H1 (cell line): ENCODE measurements at regions of chr16 and their contacts with region 1.

Region 1: DNA sequence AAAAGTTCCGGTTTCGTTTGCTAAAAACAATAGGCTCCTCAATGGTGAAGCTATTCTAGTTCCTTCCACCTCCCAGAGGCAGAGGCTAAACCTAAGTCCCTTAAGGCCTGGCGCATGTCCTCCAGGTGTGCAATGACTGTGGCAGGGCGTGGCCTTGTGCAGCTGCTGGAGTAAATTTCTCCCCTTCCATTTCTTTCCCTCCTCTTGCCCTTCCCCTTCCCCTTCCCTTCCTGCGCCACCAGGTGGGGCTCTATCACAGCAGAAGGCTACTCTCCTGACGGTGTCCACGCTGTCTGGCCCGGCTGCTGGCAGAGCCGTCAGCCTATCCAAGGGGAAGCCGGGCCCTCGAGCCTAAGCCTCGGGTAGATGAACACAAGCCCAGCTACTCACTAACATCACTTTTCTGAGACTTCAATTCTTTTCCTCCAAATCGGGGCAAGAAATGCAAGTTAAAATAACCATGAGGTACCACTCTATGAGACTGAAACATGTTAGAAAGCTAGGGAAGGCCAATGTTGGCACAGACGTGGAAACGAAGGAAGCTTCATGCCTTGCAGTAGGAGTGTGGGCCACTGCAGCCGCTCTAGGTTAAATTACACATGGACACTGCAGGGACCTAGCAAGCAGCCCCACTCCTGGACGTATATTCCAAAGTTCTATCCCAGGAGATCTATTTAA is 34.4 kb downstream of the C16orf78 start:
- DNase-seq: peak; percentile 73 to 91
- H3K4me3 ChIP-seq: no peak overlapping the region
- H3K27ac ChIP-seq: no peak overlapping the region
- H3K4me1 ChIP-seq: peaks cover 0 to 2% (median 0%) of the 10 kb centered on the region in 4 experiments; a peak in 1 of 7 replicates
- H3K27me3 ChIP-seq: no peaks in the 10 kb centered on the region; a peak in 1 of 7 replicates
- CTCF ChIP-seq: peak; percentile 86 to 94 (median 93)
- EP300 ChIP-seq: no peak
- POLR2A ChIP-seq: no peak
- RAD21 ChIP-seq: peak; percentile 100

Region 2: GRCh38 chr16:49382916-49383315 is 25.1 kb before region 1 on chr16:
- CTCF ChIA-PET with region 1: interaction called, 12 read pairs
- POLR2A ChIA-PET with region 1: no interaction called
- DNase-seq: peak in 1 of 2 experiments; percentile 70
- H3K4me3 ChIP-seq: no peak overlapping the region
- H3K27ac ChIP-seq: no peak overlapping the region
- H3K4me1 ChIP-seq: no peaks in the 10 kb centered on the region
- H3K27me3 ChIP-seq: no peaks in the 10 kb centered on the region
- CTCF ChIP-seq: peak; percentile 53 to 75 (median 58)
- EP300 ChIP-seq: no peak
- POLR2A ChIP-seq: no peak
- RAD21 ChIP-seq: peak; percentile 39 to 58

Region 3: DNA sequence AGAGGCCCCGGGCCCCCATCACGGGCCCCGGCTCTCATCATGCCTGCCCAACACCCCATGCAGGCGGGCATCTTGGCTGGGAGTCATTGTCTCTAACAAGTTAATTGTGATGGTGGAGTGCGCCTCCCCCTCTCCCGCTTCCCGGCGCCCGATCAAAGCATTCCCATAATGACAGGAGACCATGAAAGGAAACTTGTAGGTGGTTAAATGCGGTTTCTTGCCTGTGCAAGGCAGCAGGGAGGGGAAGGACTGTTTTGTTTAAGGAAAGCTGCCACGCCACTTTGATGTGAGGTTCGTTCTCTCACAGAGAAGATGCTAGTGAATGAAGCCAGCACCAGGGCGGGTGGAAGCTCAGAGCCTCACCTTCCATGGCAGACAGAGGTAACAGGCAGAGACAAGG is 11.0 kb after region 1 on chr16:
- CTCF ChIA-PET with region 1: interaction called, 16 read pairs
- POLR2A ChIA-PET with region 1: no interaction called
- DNase-seq: no peak
- H3K4me3 ChIP-seq: no peak overlapping the region
- H3K27ac ChIP-seq: no peak overlapping the region
- H3K4me1 ChIP-seq: no peaks in the 10 kb centered on the region
- H3K27me3 ChIP-seq: no peaks in the 10 kb centered on the region; a peak in 1 of 7 replicates
- CTCF ChIP-seq: no peak
- EP300 ChIP-seq: no peak
- POLR2A ChIP-seq: no peak
- RAD21 ChIP-seq: no peak

Region 4: DNA sequence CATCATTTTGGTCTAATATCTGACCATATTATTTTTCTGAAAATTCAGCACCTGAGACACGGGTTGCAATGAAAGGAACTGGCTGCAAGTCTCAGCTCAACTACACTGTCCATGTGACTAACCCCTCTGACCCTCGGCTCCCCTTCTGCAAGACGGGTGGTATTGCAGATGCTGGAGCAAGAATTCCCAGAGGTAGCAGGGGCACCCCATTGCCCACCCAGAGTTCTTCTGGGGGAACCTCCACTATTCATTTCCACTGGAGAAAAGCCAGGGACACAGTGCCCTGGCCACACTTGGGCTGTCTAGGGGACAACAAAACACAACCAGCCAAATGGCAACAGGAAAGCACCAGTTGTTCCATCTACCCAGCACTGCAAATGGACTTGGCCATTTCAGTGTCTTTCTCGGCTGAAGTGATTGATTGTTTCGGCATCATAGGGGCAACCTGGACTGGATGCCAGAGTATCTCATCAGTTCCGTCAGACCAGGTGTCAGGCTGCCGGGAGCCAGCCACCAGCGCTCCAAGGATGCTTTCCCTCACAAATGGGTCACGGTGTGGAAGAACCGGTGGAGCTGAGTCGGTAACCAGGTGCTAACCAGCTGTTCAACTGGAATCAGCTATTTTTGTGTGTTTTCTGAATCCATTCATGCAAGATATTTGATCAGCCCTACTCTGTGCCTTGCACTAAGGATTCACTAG is 23.7 kb after region 1 on chr16:
- CTCF ChIA-PET with region 1: interaction called, 33 read pairs
- POLR2A ChIA-PET with region 1: no interaction called
- DNase-seq: no peak
- H3K4me3 ChIP-seq: no peak overlapping the region
- H3K27ac ChIP-seq: no peak overlapping the region
- H3K4me1 ChIP-seq: no peaks in the 10 kb centered on the region
- H3K27me3 ChIP-seq: no peaks in the 10 kb centered on the region
- CTCF ChIP-seq: peak in 2 of 3 experiments; percentile 2 to 22; a peak in 2 of 4 replicates
- EP300 ChIP-seq: no peak
- POLR2A ChIP-seq: no peak
- RAD21 ChIP-seq: no peak

Region 5: GRCh38 chr16:49441366-49441780 is 33.4 kb after region 1 on chr16:
- CTCF ChIA-PET with region 1: interaction called, 33 read pairs
- POLR2A ChIA-PET with region 1: no interaction called
- DNase-seq: peak in 1 of 2 experiments; percentile 68
- H3K4me3 ChIP-seq: no peak overlapping the region
- H3K27ac ChIP-seq: no peak overlapping the region
- H3K4me1 ChIP-seq: peaks cover 8 to 23% (median 18%) of the 10 kb centered on the region in 4 experiments
- H3K27me3 ChIP-seq: no peaks in the 10 kb centered on the region; a peak in 1 of 7 replicates
- CTCF ChIP-seq: peak in 2 of 3 experiments; percentile 53 to 63; a peak in 2 of 4 replicates
- EP300 ChIP-seq: no peak
- POLR2A ChIP-seq: no peak
- RAD21 ChIP-seq: peak; percentile 56 to 59

Region 6: GRCh38 chr16:49688036-49688697 is 280.2 kb after region 1 on chr16:
- CTCF ChIA-PET with region 1: no interaction called
- POLR2A ChIA-PET with region 1: no interaction called
- DNase-seq: no peak
- H3K4me3 ChIP-seq: no peak overlapping the region
- H3K27ac ChIP-seq: no peak overlapping the region
- H3K4me1 ChIP-seq: no peaks in the 10 kb centered on the region; a peak in 2 of 7 replicates
- H3K27me3 ChIP-seq: no peaks in the 10 kb centered on the region
- CTCF ChIP-seq: peak in 2 of 3 experiments; percentile 15 to 31; a peak in 2 of 4 replicates
- EP300 ChIP-seq: no peak
- POLR2A ChIP-seq: no peak
- RAD21 ChIP-seq: peak; percentile 16 to 43; a peak in 1 of 4 replicates